IMR-90 (cell line): ENCODE measurements at regions of chr17 and their contacts with region 1.

Region 1: DNA sequence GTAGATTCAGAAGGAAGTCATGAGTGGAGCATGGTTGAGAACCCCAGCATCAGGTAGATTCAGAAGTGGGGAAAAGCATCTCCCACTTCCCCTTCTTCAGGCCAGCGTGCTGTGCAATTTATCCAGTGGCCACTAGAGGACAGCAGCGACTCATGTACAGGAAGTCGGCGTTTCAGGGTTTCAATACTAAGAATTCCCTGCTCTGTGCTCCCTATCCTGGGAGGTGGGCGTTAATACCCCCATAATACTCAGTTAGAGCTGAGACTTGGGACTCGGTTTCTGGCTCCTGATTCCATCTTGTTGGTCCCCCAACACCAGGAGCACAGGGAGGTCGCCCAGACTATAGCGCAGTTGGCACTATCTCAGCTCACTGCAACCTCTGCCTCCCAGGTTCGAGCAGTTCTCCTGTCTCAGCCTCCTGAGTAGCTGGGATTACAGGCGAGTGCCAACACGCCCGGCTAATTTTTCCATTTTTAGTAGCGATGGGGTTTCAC is 75.3 kb upstream of the AMZ2 start:
- DNase-seq: peak; percentile 49
- ATAC-seq: peak; percentile 96
- H3K4me3 ChIP-seq: no peak overlapping the region
- H3K27ac ChIP-seq: no peak overlapping the region
- H3K4me1 ChIP-seq: peaks cover 3% of the 10 kb centered on the region; the same call in 1 of the 2 replicates
- H3K27me3 ChIP-seq: peaks cover 3% of the 10 kb centered on the region; the same call in 1 of the 2 replicates
- CTCF ChIP-seq: peak; percentile 88
- POLR2A ChIP-seq: no peak
- RAD21 ChIP-seq: peak; percentile 87

Region 2: GRCh38 chr17:67725373-67725791 is 447.1 kb before region 1 on chr17:
- CTCF ChIA-PET with region 1: no interaction called
- POLR2A ChIA-PET with region 1: no interaction called
- dilution Hi-C with region 1: no loop called
- in situ Hi-C with region 1: no loop called
- intact Hi-C with region 1: no loop called
- DNase-seq: no peak
- ATAC-seq: no peak
- H3K4me3 ChIP-seq: no peak overlapping the region
- H3K27ac ChIP-seq: no peak overlapping the region
- H3K4me1 ChIP-seq: no peaks in the 10 kb centered on the region
- H3K27me3 ChIP-seq: no peaks in the 10 kb centered on the region
- CTCF ChIP-seq: no peak
- POLR2A ChIP-seq: no peak
- RAD21 ChIP-seq: no peak

Region 3: GRCh38 chr17:68247445-68248198 is 75.1 kb after region 1 on chr17 and contains the start of gene AMZ2:
- CTCF ChIA-PET with region 1: no interaction called
- POLR2A ChIA-PET with region 1: no interaction called
- dilution Hi-C with region 1: no loop called
- in situ Hi-C with region 1: no loop called
- intact Hi-C with region 1: loop called (anchors 5 kb)
- DNase-seq: peak; percentile 91
- ATAC-seq: peak; percentile 98
- H3K4me3 ChIP-seq: peak within 1 kb of the TSS; percentile 78
- H3K27ac ChIP-seq: peak within 1 kb of the TSS; percentile 86
- H3K4me1 ChIP-seq: no peaks in the 10 kb centered on the region
- H3K27me3 ChIP-seq: no peaks in the 10 kb centered on the region
- CTCF ChIP-seq: no peak
- POLR2A ChIP-seq: peak; percentile 81
- RAD21 ChIP-seq: no peak
- total RNA-seq, gene AMZ2: 90.2 and 100.0 TPM in 2 replicates